Mammary epithelial cell (primary cell): ENCODE measurements at regions of chr16 and their contacts with region 1.

Region 1: GRCh38 chr16:35134471-35134870 is 1675.1 kb downstream of the TP53TG3F start:
- DNase-seq: peak; percentile 95
- H3K4me3 ChIP-seq: no peak overlapping the region
- H3K27ac ChIP-seq: peak overlapping the region; percentile 78
- H3K4me1 ChIP-seq: peaks cover 21% of the 10 kb centered on the region
- H3K27me3 ChIP-seq: no peaks in the 10 kb centered on the region
- CTCF ChIP-seq: no peak

Region 2: DNA sequence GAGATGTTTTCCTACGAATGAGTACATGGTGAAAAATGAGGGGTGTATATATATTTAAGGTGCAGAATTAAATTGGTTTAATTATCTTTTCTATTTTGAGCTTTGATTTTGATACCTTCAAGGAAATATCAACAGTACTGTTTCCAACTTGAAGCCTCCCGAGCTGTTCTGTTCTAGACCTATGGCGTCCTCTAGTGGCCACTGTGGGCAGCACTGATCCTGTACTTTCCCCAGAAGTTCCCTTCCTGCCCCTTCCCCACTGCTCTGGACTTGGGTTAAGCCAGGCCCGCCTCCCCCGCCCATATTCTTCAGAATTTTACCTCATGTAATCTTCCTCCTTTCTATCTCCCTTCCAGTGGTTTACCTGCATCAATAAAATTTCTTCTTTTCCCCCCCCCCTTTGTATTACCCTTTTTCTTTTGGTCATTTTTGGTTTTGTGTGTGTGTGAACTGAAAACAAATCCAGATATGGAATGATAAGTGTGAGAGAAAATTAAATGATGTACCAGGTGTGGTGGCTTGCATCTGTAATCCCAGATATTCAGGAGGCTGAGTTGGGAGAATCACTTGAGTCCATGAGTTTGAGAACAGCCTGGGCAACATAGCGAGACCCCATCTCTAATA is 31.6 kb before region 1 on chr16:
- CTCF ChIA-PET with region 1: no interaction called
- dilution Hi-C with region 1: no loop called
- in situ Hi-C with region 1: no loop called
- intact Hi-C with region 1: no loop called
- DNase-seq: no peak
- H3K4me3 ChIP-seq: no peak overlapping the region
- H3K27ac ChIP-seq: no peak overlapping the region
- H3K4me1 ChIP-seq: no peaks in the 10 kb centered on the region
- H3K27me3 ChIP-seq: no peaks in the 10 kb centered on the region
- CTCF ChIP-seq: peak; percentile 44 to 76

Region 3: GRCh38 chr16:35195173-35195863 is 60.8 kb after region 1 on chr16:
- CTCF ChIA-PET with region 1: no interaction called
- dilution Hi-C with region 1: no loop called
- in situ Hi-C with region 1: no loop called
- intact Hi-C with region 1: no loop called
- DNase-seq: no peak
- H3K4me3 ChIP-seq: no peak overlapping the region
- H3K27ac ChIP-seq: no peak overlapping the region
- H3K4me1 ChIP-seq: no peaks in the 10 kb centered on the region
- H3K27me3 ChIP-seq: no peaks in the 10 kb centered on the region
- CTCF ChIP-seq: no peak

Region 4: GRCh38 chr16:35207059-35207999 is 72.9 kb after region 1 on chr16:
- CTCF ChIA-PET with region 1: no interaction called
- dilution Hi-C with region 1: no loop called
- in situ Hi-C with region 1: no loop called
- intact Hi-C with region 1: no loop called
- DNase-seq: no peak
- H3K4me3 ChIP-seq: no peak overlapping the region
- H3K27ac ChIP-seq: no peak overlapping the region
- H3K4me1 ChIP-seq: no peaks in the 10 kb centered on the region
- H3K27me3 ChIP-seq: no peaks in the 10 kb centered on the region
- CTCF ChIP-seq: no peak

Region 5: DNA sequence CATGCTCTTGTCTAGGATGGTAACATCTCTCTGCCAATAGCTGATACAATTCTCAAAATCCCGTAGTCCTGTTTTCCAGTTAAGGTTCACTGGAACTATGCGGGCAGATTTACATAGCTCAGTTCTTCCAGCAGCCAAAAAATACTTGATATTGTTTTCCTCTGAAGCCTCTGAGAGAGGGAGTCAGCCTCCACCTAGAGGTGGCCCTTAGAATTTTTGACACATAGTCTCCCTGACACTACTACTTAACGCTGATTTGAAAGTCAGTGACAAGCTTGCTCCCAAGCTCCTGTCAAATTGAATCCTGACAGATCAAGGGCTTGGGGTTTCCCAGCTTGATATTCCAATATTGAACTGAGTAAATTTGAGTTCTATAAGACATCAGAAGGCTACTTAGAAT is 105.1 kb after region 1 on chr16:
- CTCF ChIA-PET with region 1: no interaction called
- dilution Hi-C with region 1: no loop called
- in situ Hi-C with region 1: no loop called
- intact Hi-C with region 1: loop called (anchors 10 kb)
- DNase-seq: no peak
- H3K4me3 ChIP-seq: no peak overlapping the region
- H3K27ac ChIP-seq: no peak overlapping the region
- H3K4me1 ChIP-seq: no peaks in the 10 kb centered on the region
- H3K27me3 ChIP-seq: no peaks in the 10 kb centered on the region
- CTCF ChIP-seq: peak in 1 of 2 donors; percentile 36

Region 6: DNA sequence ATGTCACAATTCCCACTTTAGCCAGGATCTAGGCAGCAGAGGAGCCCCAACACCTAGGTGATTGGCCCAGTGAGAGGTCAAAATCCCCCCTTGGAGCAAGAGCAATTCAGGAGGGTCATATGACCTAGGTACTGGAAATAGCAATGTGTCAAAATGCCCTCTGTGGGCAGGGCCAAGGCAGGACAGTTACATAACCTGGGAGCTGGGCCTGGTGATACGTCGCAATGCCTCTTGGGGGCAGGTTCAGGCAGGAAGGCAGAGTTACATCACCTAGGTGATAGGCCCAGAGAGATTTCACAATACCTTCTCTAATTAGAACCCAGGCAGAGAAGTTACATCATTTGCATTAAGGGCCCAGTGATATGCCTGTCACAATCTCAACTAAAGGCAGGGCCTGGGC is 231.2 kb after region 1 on chr16:
- CTCF ChIA-PET with region 1: no interaction called
- dilution Hi-C with region 1: no loop called
- in situ Hi-C with region 1: no loop called
- intact Hi-C with region 1: loop called (anchors 2 kb)
- DNase-seq: peak; percentile 30
- H3K4me3 ChIP-seq: no peak overlapping the region
- H3K27ac ChIP-seq: no peak overlapping the region
- H3K4me1 ChIP-seq: peaks cover 5% of the 10 kb centered on the region
- H3K27me3 ChIP-seq: no peaks in the 10 kb centered on the region
- CTCF ChIP-seq: no peak